ENCODE measurements at regions of chr1 and their contacts with region 1.

Region 1: DNA sequence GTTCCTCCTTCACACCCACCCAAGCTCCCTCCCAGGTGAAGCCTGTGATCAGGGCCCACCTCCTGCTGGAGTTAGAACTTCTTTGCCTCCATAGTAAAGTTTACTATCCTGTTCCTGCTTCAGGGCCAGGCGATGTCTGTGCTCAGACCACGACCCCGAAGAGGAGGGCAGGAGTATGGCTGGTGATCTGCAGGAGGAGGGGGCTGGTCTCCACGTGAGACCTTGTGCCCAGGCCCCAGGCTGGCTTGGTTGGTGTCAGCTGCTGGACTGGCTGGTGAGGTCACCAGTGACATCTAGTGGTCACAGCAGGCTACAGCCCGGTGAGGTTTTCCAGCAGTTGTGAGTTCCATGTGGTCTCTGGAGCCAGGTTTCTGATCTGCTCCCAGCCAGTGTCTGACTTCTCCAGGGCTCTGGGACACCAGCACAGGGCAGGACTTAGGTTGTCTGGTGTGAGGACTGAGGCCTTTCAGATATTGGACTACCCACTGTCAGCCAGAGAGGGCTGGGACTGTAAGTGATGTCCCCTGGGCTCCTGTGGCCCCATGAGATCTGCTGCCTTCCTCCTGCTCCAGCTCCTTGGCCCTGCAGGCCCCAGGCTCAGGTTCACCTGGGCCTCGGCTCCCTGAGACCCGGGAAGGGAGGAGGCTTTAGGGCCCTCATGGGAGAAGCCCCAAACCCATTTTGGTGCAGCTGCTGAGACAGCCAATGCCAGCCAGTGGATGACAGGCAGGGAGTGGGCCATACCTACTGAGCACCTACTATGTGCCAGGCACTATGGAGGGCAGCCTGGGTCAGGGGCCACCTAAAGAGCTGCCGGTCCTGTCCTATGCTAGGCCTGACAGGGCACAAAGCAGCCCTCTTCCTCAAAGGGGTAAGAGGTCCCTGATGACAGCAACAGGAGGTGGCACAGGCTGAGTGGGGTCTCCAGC is 6.0 kb upstream of the UBL4B start:
- DNase-seq: peak; percentile 74
- H3K4me3 ChIP-seq: no peak overlapping the region
- H3K27ac ChIP-seq: no peak overlapping the region
- H3K4me1 ChIP-seq: no peaks in the 10 kb centered on the region
- H3K27me3 ChIP-seq: peaks cover 41% of the 10 kb centered on the region
- CTCF ChIP-seq: peak; percentile 94

Region 2: GRCh38 chr1:109655601-109656519 is 450.4 kb before region 1 on chr1 and contains the start of gene GSTM4:
- CTCF ChIA-PET with region 1: interaction called, 25 read pairs
- POLR2A ChIA-PET with region 1: no interaction called
- intact Hi-C with region 1: no loop called
- DNase-seq: peak; percentile 95
- H3K4me3 ChIP-seq: peak within 1 kb of the TSS; percentile 97
- H3K27ac ChIP-seq: peak within 1 kb of the TSS; percentile 93
- H3K4me1 ChIP-seq: peaks cover 37% of the 10 kb centered on the region
- H3K27me3 ChIP-seq: no peaks in the 10 kb centered on the region
- CTCF ChIP-seq: no peak
- total RNA-seq, gene GSTM4: 173 and 188 TPM in 2 replicates

Region 3: GRCh38 chr1:110053557-110054428 is 52.5 kb before region 1 on chr1:
- CTCF ChIA-PET with region 1: no interaction called
- POLR2A ChIA-PET with region 1: no interaction called
- intact Hi-C with region 1: loop called (anchors 1 kb)
- DNase-seq: peak; percentile 56
- H3K4me3 ChIP-seq: no peak overlapping the region
- H3K27ac ChIP-seq: no peak overlapping the region
- H3K4me1 ChIP-seq: no peaks in the 10 kb centered on the region
- H3K27me3 ChIP-seq: no peaks in the 10 kb centered on the region
- CTCF ChIP-seq: peak; percentile 96

Region 4: DNA sequence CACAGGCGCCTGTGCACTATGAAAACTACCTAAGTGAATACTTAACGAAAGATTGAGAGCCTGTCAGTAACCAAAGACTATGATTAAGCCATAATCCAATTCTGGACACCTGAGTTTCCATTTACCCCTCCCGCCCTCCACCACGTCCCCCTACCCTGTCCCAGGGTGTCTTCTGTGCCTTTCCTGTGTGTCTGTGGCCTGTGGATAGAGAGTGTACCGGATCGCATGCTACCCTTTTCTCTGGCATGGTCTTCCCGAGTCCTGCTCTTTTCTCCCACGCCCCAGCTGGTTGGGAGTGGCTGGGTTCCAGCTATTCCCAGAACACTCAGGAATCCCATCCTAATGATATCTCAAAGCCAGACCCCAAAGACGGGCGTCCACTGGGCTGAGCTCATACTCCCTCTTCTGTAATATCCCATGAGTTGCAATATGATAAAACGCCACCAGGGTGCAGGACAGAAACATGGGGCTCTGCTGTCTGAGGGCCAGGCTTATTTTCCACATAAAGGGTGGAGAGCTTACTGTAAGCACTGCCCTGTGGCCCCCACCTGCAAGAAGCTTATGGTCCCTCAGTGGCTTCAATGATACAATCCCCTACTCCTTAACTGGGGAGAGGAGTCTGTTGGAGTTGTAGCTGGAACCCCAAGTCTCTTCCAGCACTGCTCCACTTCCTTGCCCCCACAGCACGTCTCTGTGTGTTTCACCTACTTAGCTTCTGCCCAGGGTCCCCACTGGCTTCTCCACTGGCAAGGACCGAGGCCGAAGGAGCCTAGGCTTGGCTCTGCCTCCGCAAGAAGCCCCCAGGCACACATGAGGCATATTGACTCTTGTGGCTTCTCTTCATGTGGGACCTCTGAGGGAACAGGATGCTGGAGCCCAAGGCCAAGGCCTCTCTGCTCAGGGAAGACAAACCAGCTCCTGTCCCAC is 18.2 kb before region 1 on chr1:
- CTCF ChIA-PET with region 1: interaction called, 15 read pairs
- POLR2A ChIA-PET with region 1: no interaction called
- intact Hi-C with region 1: no loop called
- DNase-seq: peak; percentile 74
- H3K4me3 ChIP-seq: no peak overlapping the region
- H3K27ac ChIP-seq: no peak overlapping the region
- H3K4me1 ChIP-seq: peaks cover 13% of the 10 kb centered on the region
- H3K27me3 ChIP-seq: peaks cover 71% of the 10 kb centered on the region
- CTCF ChIP-seq: peak; percentile 70

Region 5: GRCh38 chr1:110338886-110339406 is 232.7 kb after region 1 on chr1 and contains the start of gene RBM15:
- CTCF ChIA-PET with region 1: no interaction called
- POLR2A ChIA-PET with region 1: no interaction called
- intact Hi-C with region 1: no loop called
- DNase-seq: peak; percentile 100
- H3K4me3 ChIP-seq: peak within 1 kb of the TSS; percentile 75
- H3K27ac ChIP-seq: peak within 1 kb of the TSS; percentile 98
- H3K4me1 ChIP-seq: peaks cover 35% of the 10 kb centered on the region
- H3K27me3 ChIP-seq: no peaks in the 10 kb centered on the region
- CTCF ChIP-seq: no peak
- total RNA-seq, gene RBM15: 59.9 and 60.3 TPM in 2 replicates